ENCODE measurements at regions of chr1 and their contacts with region 1.

Region 1: GRCh38 chr1:33295450-33296081 is 25.3 kb downstream of the A3GALT2 start:
- DNase-seq: peak; percentile 61 to 91
- ATAC-seq: peak; percentile 88

Region 2: GRCh38 chr1:33219881-33220661 is 75.5 kb before region 1 on chr1:
- intact Hi-C with region 1: no loop called
- DNase-seq: no peak
- ATAC-seq: no peak

Region 3: GRCh38 chr1:33367485-33368405 is 72.2 kb after region 1 on chr1:
- intact Hi-C with region 1: loop called (anchors 2 to 10 kb)
- DNase-seq: peak; percentile 77 to 91
- ATAC-seq: peak; percentile 94

Region 4: DNA sequence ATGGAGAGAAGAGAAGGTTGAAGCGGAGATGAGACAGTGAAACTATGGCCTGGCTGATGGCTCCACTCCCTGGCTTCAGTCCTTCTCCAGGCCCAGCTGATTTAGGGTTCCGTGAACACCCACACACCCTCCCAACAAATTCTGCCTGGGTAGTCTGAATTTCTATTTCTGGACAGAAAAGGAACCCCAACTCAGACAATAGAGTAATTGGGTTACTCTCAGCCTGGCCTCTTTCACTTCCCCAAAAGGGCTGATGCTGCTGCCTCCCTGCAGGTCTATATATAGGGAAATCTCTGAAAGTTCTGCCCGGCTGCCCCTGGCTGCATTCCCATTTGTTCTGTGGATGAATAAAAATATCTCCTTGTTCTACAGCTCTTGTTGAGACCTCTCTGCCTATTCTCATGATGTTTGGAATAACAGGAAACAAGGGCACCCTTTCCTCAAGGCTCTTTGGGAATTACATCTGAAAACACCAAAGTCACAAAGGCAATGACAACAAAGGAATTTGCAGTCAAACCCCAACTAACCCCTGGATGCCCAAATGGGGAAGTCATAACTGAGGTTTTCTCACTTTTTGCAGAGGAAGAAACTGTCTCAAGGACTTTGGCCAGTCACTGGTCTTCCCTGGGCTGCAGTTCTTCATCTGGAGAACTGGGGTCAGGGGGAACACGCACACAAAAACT is 165.5 kb after region 1 on chr1:
- intact Hi-C with region 1: loop called in 1 of 2 experiments (anchors 10 kb)
- DNase-seq: peak; percentile 36 to 51
- ATAC-seq: no peak